Endothelial cell of umbilical vein (primary cell): ENCODE measurements at regions of chr9 and their contacts with region 1.

Region 1: GRCh38 chr9:100589582-100589981 is 11.7 kb downstream of the CAVIN4 start:
- DNase-seq: peak; percentile 81
- H3K4me3 ChIP-seq: no peak overlapping the region
- H3K27ac ChIP-seq: peak overlapping the region; percentile 4
- H3K4me1 ChIP-seq: peaks cover 31% of the 10 kb centered on the region
- H3K27me3 ChIP-seq: no peaks in the 10 kb centered on the region
- CTCF ChIP-seq: no peak
- POLR2A ChIP-seq: no peak

Region 2: GRCh38 chr9:100084734-100085133 is 504.8 kb before region 1 on chr9:
- CTCF ChIA-PET with region 1: no interaction called
- POLR2A ChIA-PET with region 1: interaction called, 3 read pairs
- dilution Hi-C with region 1: no loop called
- intact Hi-C with region 1: loop called (anchors 5 kb)
- DNase-seq: no peak
- H3K4me3 ChIP-seq: no peak overlapping the region
- H3K27ac ChIP-seq: no peak overlapping the region
- H3K4me1 ChIP-seq: peaks cover 33% of the 10 kb centered on the region
- H3K27me3 ChIP-seq: no peaks in the 10 kb centered on the region
- CTCF ChIP-seq: no peak
- POLR2A ChIP-seq: no peak

Region 3: DNA sequence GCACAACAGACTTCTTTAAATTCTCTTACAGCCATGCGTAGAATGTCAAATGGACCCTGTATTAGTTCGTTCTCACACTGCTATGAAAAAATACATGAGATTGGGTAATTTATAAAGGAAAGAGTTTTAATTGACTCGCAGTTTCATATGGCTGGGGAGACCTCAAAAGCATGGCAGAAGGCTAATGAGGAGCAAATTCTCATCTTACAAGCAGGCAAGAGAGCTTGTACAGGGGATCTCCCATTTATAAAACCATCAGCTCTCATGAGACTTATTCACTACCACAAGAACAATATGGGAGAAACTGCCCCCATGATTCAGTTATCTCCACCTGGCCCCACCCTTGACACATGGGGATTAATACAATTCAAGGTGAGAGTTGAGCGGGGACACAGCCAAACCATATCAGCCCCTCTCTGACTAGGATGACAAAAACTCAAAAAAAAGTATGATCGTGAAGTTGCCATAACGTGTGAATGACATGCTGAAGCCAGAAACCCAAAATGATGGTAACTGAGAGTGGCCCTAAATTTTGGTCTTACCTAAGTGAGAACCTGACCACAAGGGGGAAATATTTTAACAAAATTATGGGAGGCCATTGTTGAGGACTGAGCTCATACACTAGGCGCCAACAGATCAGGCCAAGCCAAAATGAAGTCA is 219.4 kb before region 1 on chr9:
- CTCF ChIA-PET with region 1: no interaction called
- POLR2A ChIA-PET with region 1: no interaction called
- dilution Hi-C with region 1: no loop called
- intact Hi-C with region 1: no loop called
- DNase-seq: no peak
- H3K4me3 ChIP-seq: no peak overlapping the region
- H3K27ac ChIP-seq: no peak overlapping the region
- H3K4me1 ChIP-seq: no peaks in the 10 kb centered on the region
- H3K27me3 ChIP-seq: no peaks in the 10 kb centered on the region
- CTCF ChIP-seq: no peak
- POLR2A ChIP-seq: no peak

Region 4: GRCh38 chr9:100534371-100534770 is 55.2 kb before region 1 on chr9:
- CTCF ChIA-PET with region 1: no interaction called
- POLR2A ChIA-PET with region 1: no interaction called
- dilution Hi-C with region 1: no loop called
- intact Hi-C with region 1: no loop called
- DNase-seq: peak; percentile 45
- H3K4me3 ChIP-seq: no peak overlapping the region
- H3K27ac ChIP-seq: no peak overlapping the region
- H3K4me1 ChIP-seq: no peaks in the 10 kb centered on the region
- H3K27me3 ChIP-seq: no peaks in the 10 kb centered on the region
- CTCF ChIP-seq: no peak
- POLR2A ChIP-seq: no peak

Region 5: GRCh38 chr9:100549048-100549447 is 40.5 kb before region 1 on chr9:
- CTCF ChIA-PET with region 1: no interaction called
- POLR2A ChIA-PET with region 1: interaction called, 3 read pairs
- dilution Hi-C with region 1: no loop called
- intact Hi-C with region 1: loop called (anchors 1 kb)
- DNase-seq: peak; percentile 92
- H3K4me3 ChIP-seq: no peak overlapping the region
- H3K27ac ChIP-seq: peak overlapping the region; percentile 90
- H3K4me1 ChIP-seq: peaks cover 17% of the 10 kb centered on the region
- H3K27me3 ChIP-seq: no peaks in the 10 kb centered on the region
- CTCF ChIP-seq: no peak
- POLR2A ChIP-seq: peak; percentile 54

Region 6: GRCh38 chr9:100662122-100662521 is 72.5 kb after region 1 on chr9:
- CTCF ChIA-PET with region 1: no interaction called
- POLR2A ChIA-PET with region 1: no interaction called
- dilution Hi-C with region 1: no loop called
- intact Hi-C with region 1: no loop called
- DNase-seq: no peak
- H3K4me3 ChIP-seq: no peak overlapping the region
- H3K27ac ChIP-seq: no peak overlapping the region
- H3K4me1 ChIP-seq: no peaks in the 10 kb centered on the region
- H3K27me3 ChIP-seq: no peaks in the 10 kb centered on the region
- CTCF ChIP-seq: no peak
- POLR2A ChIP-seq: no peak